ENCODE measurements at regions of chr7 and their contacts with region 1.

Region 1: GRCh38 chr7:31735991-31736982 is 49.3 kb downstream of the PPP1R17 start:
- DNase-seq: peak; percentile 52
- ATAC-seq: peak; percentile 90
- H3K4me3 ChIP-seq: no peak overlapping the region
- H3K27ac ChIP-seq: no peak overlapping the region
- H3K4me1 ChIP-seq: no peaks in the 10 kb centered on the region
- H3K27me3 ChIP-seq: 0 out of 5 replicates have a peak, but pooled peaks cover 0 to 5% of the 10 kb centered on the region in 2 experiments
- CTCF ChIP-seq: peak; percentile 87
- EP300 ChIP-seq: no peak
- POLR2A ChIP-seq: no peak
- RAD21 ChIP-seq: peak; percentile 56; the same call in 1 of the 2 replicates

Region 2: GRCh38 chr7:31134246-31135188 is 601.8 kb before region 1 on chr7:
- CTCF ChIA-PET with region 1: interaction called, 3 read pairs
- POLR2A ChIA-PET with region 1: no interaction called
- in situ Hi-C with region 1: loop called (anchors 10 kb)
- intact Hi-C with region 1: loop called (anchors 5 kb)
- DNase-seq: peak; percentile 58
- ATAC-seq: peak; percentile 100
- H3K4me3 ChIP-seq: no peak overlapping the region
- H3K27ac ChIP-seq: no peak overlapping the region
- H3K4me1 ChIP-seq: no peaks in the 10 kb centered on the region
- H3K27me3 ChIP-seq: no peaks in the 10 kb centered on the region; a peak in 1 of 5 replicates
- CTCF ChIP-seq: peak; percentile 90
- EP300 ChIP-seq: no peak
- POLR2A ChIP-seq: no peak
- RAD21 ChIP-seq: peak; percentile 26; the same call in 1 of the 2 replicates

Region 3: GRCh38 chr7:31373337-31374289 is 362.7 kb before region 1 on chr7:
- CTCF ChIA-PET with region 1: no interaction called
- POLR2A ChIA-PET with region 1: no interaction called
- in situ Hi-C with region 1: no loop called
- intact Hi-C with region 1: loop called (anchors 1 kb)
- DNase-seq: peak; percentile 34
- ATAC-seq: peak; percentile 96
- H3K4me3 ChIP-seq: no peak overlapping the region
- H3K27ac ChIP-seq: no peak overlapping the region
- H3K4me1 ChIP-seq: no peaks in the 10 kb centered on the region
- H3K27me3 ChIP-seq: peaks cover 0 to 8% of the 10 kb centered on the region in 2 experiments; a peak in 1 of 5 replicates
- CTCF ChIP-seq: peak; percentile 64
- EP300 ChIP-seq: no peak
- POLR2A ChIP-seq: no peak
- RAD21 ChIP-seq: no peak

Region 4: DNA sequence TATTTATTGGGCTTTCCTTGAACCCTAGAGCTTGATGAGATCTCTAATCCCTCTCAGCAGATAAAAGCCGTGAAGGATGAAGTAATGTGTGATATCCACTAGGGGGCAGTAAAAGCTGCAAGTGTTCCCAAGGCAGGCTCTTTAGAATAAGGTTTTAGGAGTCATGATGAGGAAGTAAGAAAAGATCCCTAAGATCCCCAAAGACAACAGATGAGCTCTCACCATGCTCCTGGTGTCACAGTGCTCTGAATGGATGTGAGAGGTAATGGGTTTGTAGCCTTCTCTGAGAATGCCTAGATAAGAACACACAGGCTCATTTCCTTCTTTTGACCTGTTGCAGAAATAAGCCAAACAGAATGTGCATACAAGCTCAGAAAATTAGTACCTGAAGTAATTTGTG is 292.8 kb before region 1 on chr7:
- CTCF ChIA-PET with region 1: interaction called, 5 read pairs
- POLR2A ChIA-PET with region 1: no interaction called
- in situ Hi-C with region 1: no loop called
- intact Hi-C with region 1: loop called (anchors 1 kb)
- DNase-seq: peak; percentile 26
- ATAC-seq: peak; percentile 69
- H3K4me3 ChIP-seq: no peak overlapping the region
- H3K27ac ChIP-seq: no peak overlapping the region
- H3K4me1 ChIP-seq: no peaks in the 10 kb centered on the region
- H3K27me3 ChIP-seq: 0 out of 5 replicates have a peak, but pooled peaks cover 0 to 1% of the 10 kb centered on the region in 2 experiments
- CTCF ChIP-seq: peak; percentile 70
- EP300 ChIP-seq: no peak
- POLR2A ChIP-seq: no peak
- RAD21 ChIP-seq: no peak

Region 5: GRCh38 chr7:31648288-31648687 is 88.0 kb before region 1 on chr7:
- CTCF ChIA-PET with region 1: interaction called, 5 read pairs
- POLR2A ChIA-PET with region 1: no interaction called
- in situ Hi-C with region 1: no loop called
- intact Hi-C with region 1: loop called (anchors 1 kb)
- DNase-seq: peak; percentile 2
- ATAC-seq: no peak
- H3K4me3 ChIP-seq: no peak overlapping the region
- H3K27ac ChIP-seq: no peak overlapping the region
- H3K4me1 ChIP-seq: no peaks in the 10 kb centered on the region
- H3K27me3 ChIP-seq: no peaks in the 10 kb centered on the region
- CTCF ChIP-seq: no peak
- EP300 ChIP-seq: no peak
- POLR2A ChIP-seq: no peak
- RAD21 ChIP-seq: no peak

Region 6: DNA sequence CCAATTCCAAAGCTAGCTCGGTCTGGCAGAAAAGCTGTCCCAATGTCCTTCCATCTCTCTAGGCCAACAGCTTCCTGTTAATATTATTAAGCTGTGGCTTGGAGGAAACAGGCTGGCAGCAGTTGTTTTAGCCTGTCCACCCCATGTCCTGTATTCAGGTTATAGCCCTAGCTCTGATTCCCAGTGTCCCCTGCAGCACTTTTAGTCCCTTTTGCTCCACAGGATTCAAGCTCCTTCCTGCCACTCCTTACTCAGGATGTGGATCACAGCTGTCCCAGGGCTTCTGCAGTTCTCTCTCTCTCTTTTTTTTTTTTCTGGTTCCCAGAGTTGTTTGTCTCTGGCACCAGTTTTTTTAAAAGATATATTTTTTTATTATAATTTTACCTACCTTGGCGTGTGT is 35.9 kb after region 1 on chr7:
- CTCF ChIA-PET with region 1: no interaction called
- POLR2A ChIA-PET with region 1: no interaction called
- in situ Hi-C with region 1: no loop called
- intact Hi-C with region 1: no loop called
- DNase-seq: no peak
- ATAC-seq: no peak
- H3K4me3 ChIP-seq: no peak overlapping the region
- H3K27ac ChIP-seq: no peak overlapping the region
- H3K4me1 ChIP-seq: no peaks in the 10 kb centered on the region
- H3K27me3 ChIP-seq: peaks cover 0 to 4% of the 10 kb centered on the region in 2 experiments; a peak in 1 of 5 replicates
- CTCF ChIP-seq: no peak
- EP300 ChIP-seq: no peak
- POLR2A ChIP-seq: no peak
- RAD21 ChIP-seq: no peak

Region 7: GRCh38 chr7:31782411-31782991 is 46.2 kb after region 1 on chr7:
- CTCF ChIA-PET with region 1: no interaction called
- POLR2A ChIA-PET with region 1: no interaction called
- in situ Hi-C with region 1: no loop called
- intact Hi-C with region 1: no loop called
- DNase-seq: peak; percentile 47
- ATAC-seq: peak; percentile 93
- H3K4me3 ChIP-seq: no peak overlapping the region
- H3K27ac ChIP-seq: no peak overlapping the region
- H3K4me1 ChIP-seq: no peaks in the 10 kb centered on the region
- H3K27me3 ChIP-seq: 0 out of 5 replicates have a peak, but pooled peaks cover 0 to 4% of the 10 kb centered on the region in 2 experiments
- CTCF ChIP-seq: peak; percentile 64
- EP300 ChIP-seq: no peak
- POLR2A ChIP-seq: no peak
- RAD21 ChIP-seq: no peak

Measured in HepG2 (cell line).